HEK293 (cell line): ENCODE measurements at regions of chr9 and their contacts with region 1.

Region 1: GRCh38 chr9:77433675-77434445 is 214.3 kb downstream of the GNA14 start:
- H3K4me3 ChIP-seq: no peak overlapping the region
- H3K27ac ChIP-seq: no peak overlapping the region
- H3K4me1 ChIP-seq: no peaks in the 10 kb centered on the region
- CTCF ChIP-seq: peak; percentile 70

Region 2: GRCh38 chr9:77402286-77402685 is 31.6 kb before region 1 on chr9:
- CTCF ChIA-PET with region 1: no interaction called
- POLR2A ChIA-PET with region 1: no interaction called
- H3K4me3 ChIP-seq: no peak overlapping the region
- H3K27ac ChIP-seq: no peak overlapping the region
- H3K4me1 ChIP-seq: no peaks in the 10 kb centered on the region
- CTCF ChIP-seq: no peak

Region 3: GRCh38 chr9:77488439-77489126 is 54.7 kb after region 1 on chr9:
- CTCF ChIA-PET with region 1: interaction called, 18 read pairs
- POLR2A ChIA-PET with region 1: no interaction called
- H3K4me3 ChIP-seq: no peak overlapping the region
- H3K27ac ChIP-seq: no peak overlapping the region
- H3K4me1 ChIP-seq: no peaks in the 10 kb centered on the region
- CTCF ChIP-seq: no peak

Region 4: DNA sequence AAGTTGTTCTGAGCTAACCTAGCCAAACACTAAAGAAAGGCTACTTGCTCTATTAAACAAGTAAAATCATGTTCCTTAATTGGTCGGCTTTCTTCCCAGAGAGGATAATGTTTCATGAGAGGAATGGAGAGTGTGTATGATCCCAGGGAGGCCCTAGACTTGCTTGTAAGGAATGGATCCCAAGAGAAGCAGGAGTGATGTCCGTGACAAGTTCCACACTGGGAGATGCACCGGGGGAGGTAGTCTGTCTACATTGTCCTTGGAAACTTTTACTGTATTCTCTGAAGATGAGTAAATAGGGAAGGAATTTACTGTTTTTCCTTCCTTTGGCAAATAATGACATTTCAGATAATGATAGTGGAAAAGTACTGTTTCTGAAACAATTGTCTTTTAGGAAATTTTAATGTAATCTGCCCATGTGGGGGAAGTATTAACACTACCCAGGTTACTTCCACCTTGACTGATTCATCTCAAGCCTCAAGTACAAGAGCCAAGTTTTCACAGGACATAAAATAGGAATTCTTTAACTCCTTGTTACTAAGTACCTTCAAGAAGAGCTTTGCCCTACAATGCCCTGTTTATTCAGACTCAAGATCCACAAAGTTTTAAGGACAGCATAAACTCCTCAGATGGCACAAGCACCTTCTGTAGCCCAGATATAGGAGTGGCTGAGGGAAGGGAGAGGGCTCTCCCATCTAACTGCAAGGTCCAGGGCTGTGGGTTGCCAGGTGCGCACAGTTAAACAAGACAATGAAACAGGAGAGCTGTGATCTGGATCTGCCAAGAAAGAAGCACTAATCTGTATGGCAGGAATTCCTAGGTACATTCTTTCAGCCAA is 62.2 kb after region 1 on chr9:
- CTCF ChIA-PET with region 1: interaction called, 11 read pairs
- POLR2A ChIA-PET with region 1: no interaction called
- H3K4me3 ChIP-seq: no peak overlapping the region
- H3K27ac ChIP-seq: no peak overlapping the region; the same call in 1 of the 2 replicates
- H3K4me1 ChIP-seq: no peaks in the 10 kb centered on the region; the same call in 1 of the 2 replicates
- CTCF ChIP-seq: no peak

Region 5: DNA sequence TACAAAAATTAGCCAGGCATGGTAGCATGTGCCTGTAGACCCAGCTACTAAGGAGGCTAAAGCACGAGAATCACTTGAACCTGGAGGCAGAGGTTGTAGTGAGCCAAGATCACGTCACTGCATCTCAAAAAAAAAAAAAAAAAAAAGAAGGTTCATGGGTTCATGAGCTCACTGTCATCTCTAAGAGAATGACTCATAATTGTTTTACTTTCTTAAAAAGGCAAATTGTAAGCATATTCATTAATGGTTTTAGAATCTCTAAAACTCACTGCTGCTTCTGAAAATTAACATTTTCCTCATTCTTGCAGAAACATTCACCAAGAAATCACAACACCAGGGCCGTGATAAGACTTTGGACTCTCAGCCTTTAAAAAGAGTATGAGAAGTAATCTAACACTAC is 110.7 kb after region 1 on chr9:
- CTCF ChIA-PET with region 1: no interaction called
- POLR2A ChIA-PET with region 1: no interaction called
- H3K4me3 ChIP-seq: no peak overlapping the region
- H3K27ac ChIP-seq: no peak overlapping the region
- H3K4me1 ChIP-seq: no peaks in the 10 kb centered on the region
- CTCF ChIP-seq: no peak

Region 6: DNA sequence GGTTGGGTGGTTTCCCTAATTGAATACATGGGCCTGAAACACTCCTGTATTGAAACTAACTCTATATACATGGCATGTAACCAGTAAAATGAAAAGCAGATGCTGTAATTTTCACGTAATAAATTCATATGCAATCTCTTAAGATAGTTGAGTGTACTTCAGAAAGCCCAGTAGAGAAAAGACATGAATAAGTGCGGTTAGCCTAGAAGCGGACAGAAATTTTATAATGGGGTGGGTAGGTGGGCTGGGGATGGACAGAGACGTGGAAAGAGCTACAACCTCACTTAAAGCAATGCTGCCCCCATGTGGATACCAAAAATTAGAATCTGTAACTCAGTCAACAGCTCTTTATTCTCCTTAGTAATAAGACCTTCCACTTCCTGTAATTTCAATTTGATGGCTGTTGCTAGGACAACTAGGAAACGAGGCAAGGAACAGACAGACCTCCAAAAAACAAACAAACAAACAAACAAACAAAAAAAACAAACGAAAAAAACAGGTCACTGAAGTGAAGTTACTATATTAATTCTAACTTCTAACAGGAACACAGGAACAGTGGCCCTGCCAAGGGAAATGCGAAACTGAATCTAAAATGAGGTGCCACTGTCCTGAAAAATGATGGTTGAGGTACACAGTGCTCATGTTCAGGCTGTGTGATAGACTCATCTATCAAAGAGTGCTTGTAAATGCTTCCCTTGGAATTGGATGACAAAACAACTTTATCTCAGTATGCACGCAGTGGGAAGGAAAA is 317.7 kb after region 1 on chr9:
- CTCF ChIA-PET with region 1: interaction called, 14 read pairs
- POLR2A ChIA-PET with region 1: no interaction called
- H3K4me3 ChIP-seq: no peak overlapping the region
- H3K27ac ChIP-seq: no peak overlapping the region
- H3K4me1 ChIP-seq: no peaks in the 10 kb centered on the region
- CTCF ChIP-seq: peak; percentile 41

Region 7: DNA sequence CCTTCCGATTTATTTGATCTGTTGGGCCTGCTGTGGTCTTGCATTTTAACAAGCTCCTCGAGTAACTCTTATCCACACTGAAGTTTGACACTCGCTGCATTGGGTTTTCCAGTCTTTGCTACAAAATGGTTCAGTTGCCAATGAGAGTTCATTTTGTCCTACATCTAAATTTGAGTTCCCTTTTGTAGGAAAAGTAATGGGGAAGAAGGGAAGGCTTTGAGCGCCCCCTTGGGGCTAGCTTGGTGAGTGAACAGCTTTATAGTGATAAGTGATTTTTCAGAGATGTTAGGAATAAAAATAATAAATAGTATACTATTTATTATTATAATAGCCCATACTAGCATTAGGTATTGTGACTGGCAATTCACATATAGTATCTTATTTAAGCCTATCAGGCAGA is 687.6 kb after region 1 on chr9:
- CTCF ChIA-PET with region 1: interaction called, 14 read pairs
- POLR2A ChIA-PET with region 1: no interaction called
- H3K4me3 ChIP-seq: no peak overlapping the region
- H3K27ac ChIP-seq: no peak overlapping the region
- H3K4me1 ChIP-seq: no peaks in the 10 kb centered on the region
- CTCF ChIP-seq: no peak